Left ventricle myocardium inferior (tissue), 1 donor: ENCODE measurements at regions of chr5 and their contacts with region 1.

Region 1: DNA sequence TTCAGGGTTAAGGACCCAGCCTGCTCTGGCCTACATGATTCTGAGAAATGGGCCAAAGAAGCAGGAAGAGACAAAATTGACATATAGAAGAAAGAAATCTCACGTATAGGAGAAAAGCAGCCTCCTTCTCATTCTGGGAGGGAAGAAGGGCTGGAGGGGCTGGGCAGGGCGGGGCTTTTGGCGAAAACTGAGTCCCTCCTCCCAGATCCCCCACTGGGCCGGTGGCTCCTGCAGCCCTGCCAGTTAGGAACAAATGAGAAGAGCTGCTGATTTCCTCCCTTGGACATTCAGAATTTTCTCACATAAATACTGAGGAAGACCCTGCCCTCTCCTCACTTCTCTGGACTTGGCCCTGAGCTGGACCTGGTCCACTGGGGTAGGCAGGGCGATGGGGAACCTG is at the start of gene WNT8A:
- DNase-seq: no peak
- H3K4me3 ChIP-seq: no peak within 1 kb of the TSS
- H3K27ac ChIP-seq: no peak within 1 kb of the TSS
- H3K4me1 ChIP-seq: no peaks in the 10 kb centered on the region
- H3K27me3 ChIP-seq: no peaks in the 10 kb centered on the region
- CTCF ChIP-seq: no peak
- total RNA-seq, gene WNT8A: not detected

Region 2: GRCh38 chr5:138011991-138012390 is 71.7 kb before region 1 on chr5:
- intact Hi-C with region 1: no loop called
- DNase-seq: no peak
- H3K4me3 ChIP-seq: no peak overlapping the region
- H3K27ac ChIP-seq: no peak overlapping the region
- H3K4me1 ChIP-seq: peaks cover 3% of the 10 kb centered on the region
- H3K27me3 ChIP-seq: no peaks in the 10 kb centered on the region
- CTCF ChIP-seq: no peak

Region 3: DNA sequence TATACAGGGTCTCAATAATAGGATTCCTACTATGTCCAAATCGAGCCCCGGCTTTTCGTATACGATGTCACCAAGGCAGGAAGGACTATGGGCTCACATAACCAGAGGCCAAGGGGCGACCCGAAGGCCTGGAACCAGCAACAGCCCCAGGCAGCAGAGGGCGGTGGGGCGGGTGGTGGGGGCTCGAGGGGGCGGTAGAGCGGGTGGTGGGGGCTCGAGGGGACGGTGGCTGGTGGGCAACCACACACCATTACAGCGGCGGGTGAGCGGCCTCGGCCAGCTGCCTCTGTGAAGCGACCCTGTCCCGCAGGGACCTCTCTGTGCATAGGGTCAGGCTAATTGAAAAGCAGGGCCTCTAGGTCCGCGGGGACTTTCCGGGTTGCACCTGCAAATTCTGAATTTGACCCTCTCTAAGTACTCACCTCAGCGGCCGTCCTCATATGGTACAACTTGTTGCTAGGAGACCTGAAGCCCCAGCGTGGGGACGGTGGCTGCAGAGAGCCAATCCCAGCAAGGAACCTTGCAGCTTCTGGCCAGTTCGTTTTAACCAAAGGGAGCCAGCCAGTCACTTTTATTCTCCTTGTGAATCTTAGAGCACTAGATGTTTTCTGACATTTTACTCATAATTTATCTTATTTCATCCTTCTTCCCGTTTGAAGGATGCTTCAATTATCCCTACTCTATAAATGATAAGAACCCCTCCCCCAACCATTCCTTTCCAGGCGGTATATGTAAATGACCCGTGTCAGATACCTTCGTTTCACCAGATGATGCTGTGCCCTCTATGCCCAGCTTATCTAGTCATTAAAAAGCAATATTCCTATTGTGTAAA is 55.5 kb after region 1 on chr5 and contains the start of gene NME5:
- intact Hi-C with region 1: loop called (anchors 10 kb)
- DNase-seq: peak; percentile 67
- H3K4me3 ChIP-seq: peak within 1 kb of the TSS; percentile 78
- H3K27ac ChIP-seq: peak within 1 kb of the TSS; percentile 42
- H3K4me1 ChIP-seq: peaks cover 13% of the 10 kb centered on the region
- H3K27me3 ChIP-seq: no peaks in the 10 kb centered on the region
- CTCF ChIP-seq: no peak
- total RNA-seq, gene NME5: 4.7 TPM